ENCODE measurements at regions of chr2 and their contacts with region 1.

Region 1: GRCh38 chr2:203599509-203599908 is 64.4 kb upstream of the RAPH1 start:
- DNase-seq: no peak
- H3K4me3 ChIP-seq: peak overlapping the region; percentile 61
- H3K27ac ChIP-seq: peak overlapping the region; percentile 91
- H3K4me1 ChIP-seq: peaks cover 61% of the 10 kb centered on the region
- CTCF ChIP-seq: no peak

Region 2: DNA sequence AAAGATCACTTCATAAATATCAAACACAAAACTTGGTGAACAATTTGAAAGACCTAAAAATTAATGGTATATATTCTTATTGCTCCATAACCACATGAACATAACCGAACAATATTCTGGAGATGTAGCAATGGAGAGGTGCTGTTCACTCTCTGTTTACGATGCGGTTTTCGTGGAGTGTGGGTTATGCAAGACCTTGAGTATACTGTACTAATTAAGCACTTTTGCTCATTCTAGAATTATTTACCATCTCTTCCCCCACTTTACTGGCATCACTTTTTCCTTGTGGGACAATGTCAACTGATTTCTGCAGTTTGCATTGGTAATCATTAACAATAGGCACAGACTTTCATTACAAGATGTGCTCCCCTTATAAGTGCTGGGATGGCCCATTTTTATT is 162.0 kb before region 1 on chr2:
- CTCF ChIA-PET with region 1: no interaction called
- POLR2A ChIA-PET with region 1: no interaction called
- intact Hi-C with region 1: no loop called
- DNase-seq: no peak
- H3K4me3 ChIP-seq: no peak overlapping the region
- H3K27ac ChIP-seq: no peak overlapping the region
- H3K4me1 ChIP-seq: peaks cover 17% of the 10 kb centered on the region
- CTCF ChIP-seq: no peak

Region 3: GRCh38 chr2:203484266-203485112 is 115.0 kb before region 1 on chr2:
- CTCF ChIA-PET with region 1: no interaction called
- POLR2A ChIA-PET with region 1: interaction called, 6 read pairs
- intact Hi-C with region 1: loop called (anchors 1 kb)
- DNase-seq: peak; percentile 82
- H3K4me3 ChIP-seq: no peak overlapping the region
- H3K27ac ChIP-seq: peak overlapping the region; percentile 48
- H3K4me1 ChIP-seq: peaks cover 25% of the 10 kb centered on the region
- CTCF ChIP-seq: peak; percentile 99

Region 4: DNA sequence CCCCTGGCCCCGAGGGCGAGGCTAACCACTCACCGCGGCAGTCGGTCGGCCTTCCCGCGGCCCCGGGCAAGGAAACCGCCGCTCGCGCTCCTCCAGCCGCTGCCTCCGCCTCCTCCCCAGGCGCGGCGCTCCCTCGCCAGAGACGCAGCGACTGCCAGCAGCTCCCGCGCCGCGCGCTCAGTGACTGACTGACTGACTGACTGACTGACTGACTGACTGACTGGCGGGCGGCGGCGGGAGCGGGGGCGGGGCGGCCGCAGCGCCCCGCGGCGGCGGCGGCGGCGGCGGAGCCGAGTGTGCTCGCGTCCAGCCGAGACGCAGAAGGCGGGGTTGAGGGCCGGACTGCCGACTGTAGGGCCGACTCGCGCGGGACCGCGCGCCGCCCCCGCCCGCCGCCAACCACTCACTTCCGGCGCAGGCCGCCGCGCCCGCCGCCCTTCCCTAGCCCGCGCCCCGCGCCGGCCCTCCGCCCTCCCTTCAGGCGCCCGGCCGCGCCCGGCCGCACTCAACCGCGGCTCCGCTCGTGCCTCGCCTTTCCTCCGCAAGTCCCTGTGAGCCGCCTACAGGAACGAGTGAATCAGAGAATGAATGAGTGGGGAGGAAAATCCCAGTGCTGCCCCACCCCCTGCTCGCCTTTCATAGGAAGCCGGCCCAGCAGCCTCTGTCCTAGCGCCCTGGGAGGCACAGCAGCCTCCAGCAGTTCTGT is 64.3 kb before region 1 on chr2 and contains the start of gene RAPH1:
- CTCF ChIA-PET with region 1: no interaction called
- POLR2A ChIA-PET with region 1: interaction called, 4 read pairs
- intact Hi-C with region 1: loop called (anchors 5 kb)
- DNase-seq: peak; percentile 82
- H3K4me3 ChIP-seq: peak within 1 kb of the TSS; percentile 90
- H3K27ac ChIP-seq: peak within 1 kb of the TSS; percentile 58
- H3K4me1 ChIP-seq: peaks cover 31% of the 10 kb centered on the region
- CTCF ChIP-seq: no peak
- total RNA-seq, gene RAPH1: 4.0 and 4.5 TPM in 2 replicates

Region 5: DNA sequence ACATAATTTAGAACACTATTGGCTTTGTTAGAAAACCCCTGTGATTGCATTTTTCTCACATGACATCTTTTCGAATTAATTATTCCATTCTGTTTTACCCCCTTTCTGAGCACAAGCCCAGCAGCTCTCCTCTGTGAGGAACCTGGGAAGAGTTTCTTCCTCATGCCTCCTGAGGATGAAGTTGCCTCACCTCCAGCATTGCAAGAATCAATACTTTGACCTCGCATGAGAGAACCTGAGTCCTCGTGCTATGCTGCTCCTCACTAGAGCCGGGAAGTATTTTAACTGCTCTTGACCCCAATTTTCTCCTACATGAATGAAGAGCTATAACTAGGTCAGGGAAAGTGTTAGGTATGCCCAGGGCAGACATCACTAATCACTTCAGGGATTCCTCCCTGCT is 12.8 kb after region 1 on chr2:
- CTCF ChIA-PET with region 1: no interaction called
- POLR2A ChIA-PET with region 1: interaction called, 12 read pairs
- intact Hi-C with region 1: no loop called
- DNase-seq: no peak
- H3K4me3 ChIP-seq: no peak overlapping the region
- H3K27ac ChIP-seq: no peak overlapping the region
- H3K4me1 ChIP-seq: peaks cover 13% of the 10 kb centered on the region
- CTCF ChIP-seq: no peak